ENCODE measurements at regions of chr4 and their contacts with region 1.

Region 1: DNA sequence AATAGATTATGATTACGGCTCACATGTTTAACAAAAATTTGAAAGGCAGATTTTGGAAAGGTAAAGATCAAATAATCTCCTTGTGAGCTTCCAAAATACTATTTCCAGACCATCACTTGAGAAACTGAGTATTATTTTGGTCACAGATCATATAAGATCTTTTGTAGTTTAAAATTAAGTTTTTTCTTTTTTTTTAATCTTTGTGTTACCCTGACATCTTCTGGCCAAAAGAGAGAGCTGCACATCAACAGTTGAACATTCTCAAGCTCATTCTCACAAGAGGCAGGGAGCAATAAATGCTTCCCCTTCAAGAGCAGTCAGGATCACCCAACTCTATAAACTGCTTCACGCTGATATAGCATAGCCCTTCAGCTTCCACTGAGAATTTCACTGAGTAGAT is 15.9 kb downstream of the TMEM192 start:
- DNase-seq: peak; percentile 44
- ATAC-seq: peak; percentile 69
- H3K4me3 ChIP-seq: no peak overlapping the region
- H3K27ac ChIP-seq: no peak overlapping the region
- H3K4me1 ChIP-seq: no peaks in the 10 kb centered on the region
- H3K27me3 ChIP-seq: no peaks in the 10 kb centered on the region
- CTCF ChIP-seq: peak; percentile 60
- POLR2A ChIP-seq: no peak
- RAD21 ChIP-seq: peak; percentile 52

Region 2: GRCh38 chr4:164768516-164768915 is 328.3 kb before region 1 on chr4:
- CTCF ChIA-PET with region 1: interaction called, 7 read pairs
- POLR2A ChIA-PET with region 1: no interaction called
- dilution Hi-C with region 1: no loop called
- in situ Hi-C with region 1: loop called (anchors 10 kb)
- intact Hi-C with region 1: loop called (anchors 2 kb)
- DNase-seq: peak; percentile 3
- ATAC-seq: peak; percentile 48
- H3K4me3 ChIP-seq: no peak overlapping the region
- H3K27ac ChIP-seq: no peak overlapping the region
- H3K4me1 ChIP-seq: no peaks in the 10 kb centered on the region
- H3K27me3 ChIP-seq: no peaks in the 10 kb centered on the region
- CTCF ChIP-seq: peak; percentile 36; the same call in 1 of the 2 replicates
- POLR2A ChIP-seq: no peak
- RAD21 ChIP-seq: no peak

Region 3: GRCh38 chr4:164779811-164780216 is 317.0 kb before region 1 on chr4:
- CTCF ChIA-PET with region 1: interaction called, 3 read pairs
- POLR2A ChIA-PET with region 1: no interaction called
- dilution Hi-C with region 1: no loop called
- in situ Hi-C with region 1: loop called (anchors 10 kb)
- intact Hi-C with region 1: loop called (anchors 1 kb)
- DNase-seq: peak; percentile 31
- ATAC-seq: peak; percentile 51
- H3K4me3 ChIP-seq: no peak overlapping the region
- H3K27ac ChIP-seq: no peak overlapping the region
- H3K4me1 ChIP-seq: no peaks in the 10 kb centered on the region
- H3K27me3 ChIP-seq: no peaks in the 10 kb centered on the region
- CTCF ChIP-seq: peak; percentile 63
- POLR2A ChIP-seq: no peak
- RAD21 ChIP-seq: peak; percentile 58

Region 4: DNA sequence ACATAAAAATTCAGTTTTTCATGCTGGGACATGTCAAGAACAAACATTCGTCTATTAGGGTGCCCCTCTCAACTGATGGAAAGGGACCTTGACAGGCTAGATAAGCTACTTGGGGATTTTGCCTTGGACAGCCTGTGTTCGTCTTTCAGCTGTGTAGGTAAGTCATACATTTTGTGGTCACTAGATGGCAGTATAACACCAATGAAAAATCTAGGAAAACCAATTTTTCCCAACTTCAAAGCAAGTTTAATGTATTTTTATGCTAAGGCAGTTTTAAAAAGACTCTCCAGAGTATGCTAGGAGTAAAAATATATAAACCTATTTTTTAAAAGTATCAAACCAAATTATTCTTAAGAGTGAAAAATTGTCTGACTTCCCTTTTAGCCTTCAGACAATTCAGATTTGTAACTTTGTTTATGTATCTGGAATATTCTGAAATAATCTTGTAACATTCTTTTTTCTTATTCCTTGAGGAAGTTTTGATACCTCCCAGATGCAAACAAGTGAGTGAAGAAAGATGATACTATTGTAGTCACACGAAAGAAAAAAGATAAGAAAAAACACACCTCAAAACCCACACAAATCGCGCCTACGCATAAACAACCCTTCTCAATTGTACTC is 440.4 kb after region 1 on chr4:
- CTCF ChIA-PET with region 1: no interaction called
- POLR2A ChIA-PET with region 1: interaction called, 10 read pairs
- dilution Hi-C with region 1: no loop called
- in situ Hi-C with region 1: no loop called
- intact Hi-C with region 1: no loop called
- DNase-seq: peak; percentile 39
- ATAC-seq: peak; percentile 59
- H3K4me3 ChIP-seq: no peak overlapping the region
- H3K27ac ChIP-seq: no peak overlapping the region
- H3K4me1 ChIP-seq: no peaks in the 10 kb centered on the region
- H3K27me3 ChIP-seq: no peaks in the 10 kb centered on the region
- CTCF ChIP-seq: peak; percentile 66
- POLR2A ChIP-seq: no peak
- RAD21 ChIP-seq: peak; percentile 55